Activated naive CD4-positive, alpha-beta T cell treated with anti-CD3 and anti-CD28 coated beads for 36 hours (primary cell): ENCODE measurements at regions of chr7 and their contacts with region 1.

Region 1: DNA sequence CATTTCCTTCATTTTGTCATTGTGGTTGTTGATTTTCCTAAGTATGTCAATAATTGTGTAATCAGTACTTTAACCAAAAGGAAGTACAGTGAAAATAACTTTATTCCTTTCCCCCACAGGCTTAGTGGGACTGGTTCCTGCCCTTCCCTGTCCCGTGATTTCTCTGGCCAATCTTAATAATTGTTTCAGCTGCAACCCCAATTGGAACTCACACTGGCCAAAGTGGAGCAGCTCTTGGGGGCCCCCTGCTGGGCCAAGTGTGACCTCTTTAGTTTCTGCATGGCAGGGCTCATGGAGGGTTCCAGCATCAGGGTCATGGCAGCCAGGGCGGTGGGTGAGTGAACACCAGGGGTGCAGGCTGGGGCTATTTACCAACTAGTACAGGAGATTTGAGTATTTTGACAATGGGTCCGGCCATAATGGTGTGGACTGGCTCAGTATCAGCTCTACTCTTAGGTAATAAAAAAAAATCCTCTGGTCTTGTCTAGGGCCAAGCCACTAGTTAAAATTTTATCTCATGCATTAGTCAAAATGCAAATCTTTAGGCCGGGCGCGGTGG is 31.7 kb downstream of the CYCS start:
- DNase-seq: peak; percentile 90
- H3K4me3 Mint-ChIP-seq: no peak overlapping the region
- H3K27ac Mint-ChIP-seq: no peak overlapping the region
- H3K4me1 Mint-ChIP-seq: peaks cover 8% of the 10 kb centered on the region
- H3K27me3 Mint-ChIP-seq: peaks cover 2% of the 10 kb centered on the region

Region 2: DNA sequence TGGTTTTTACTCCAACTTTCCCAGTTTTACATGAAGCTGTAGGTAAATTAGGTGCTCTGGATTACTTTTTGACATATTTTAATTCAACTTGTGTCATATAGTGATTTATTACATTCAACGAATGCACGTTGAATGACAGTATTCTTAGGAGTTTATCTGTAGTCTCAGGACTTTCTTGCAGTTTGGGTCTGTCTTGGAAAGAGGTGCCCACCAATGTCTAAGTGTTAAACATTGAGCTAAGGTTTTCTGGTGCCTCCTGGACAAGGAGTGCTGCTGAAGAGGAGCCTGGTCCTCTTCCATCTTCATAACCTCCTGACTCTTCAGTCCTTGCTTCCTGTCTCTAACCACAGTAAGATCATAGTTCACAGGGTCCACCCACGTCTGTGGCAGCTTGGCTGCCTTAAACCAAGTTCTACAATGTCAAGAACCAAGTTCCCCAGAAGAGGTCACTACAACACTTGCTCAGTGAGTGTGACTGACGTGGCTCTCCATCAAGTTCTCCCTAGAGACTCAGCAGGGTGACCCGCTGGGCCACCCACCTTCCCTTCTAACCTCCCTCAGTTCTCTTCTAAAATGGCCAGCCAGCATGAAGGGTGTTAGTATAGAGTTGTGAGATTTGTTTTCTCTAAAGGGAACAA is 803.2 kb before region 1 on chr7:
- CTCF ChIA-PET with region 1: no interaction called
- intact Hi-C with region 1: loop called (anchors 5 kb)
- DNase-seq: peak; percentile 74
- H3K4me3 Mint-ChIP-seq: no peak overlapping the region
- H3K27ac Mint-ChIP-seq: no peak overlapping the region
- H3K4me1 Mint-ChIP-seq: peaks cover 12% of the 10 kb centered on the region
- H3K27me3 Mint-ChIP-seq: peaks cover 29% of the 10 kb centered on the region

Region 3: GRCh38 chr7:24722386-24723177 is 370.8 kb before region 1 on chr7:
- CTCF ChIA-PET with region 1: interaction called, 3 read pairs
- intact Hi-C with region 1: loop called (anchors 10 kb)
- DNase-seq: no peak
- H3K4me3 Mint-ChIP-seq: no peak overlapping the region
- H3K27ac Mint-ChIP-seq: no peak overlapping the region
- H3K4me1 Mint-ChIP-seq: peaks cover 8% of the 10 kb centered on the region
- H3K27me3 Mint-ChIP-seq: peaks cover 12% of the 10 kb centered on the region

Region 4: DNA sequence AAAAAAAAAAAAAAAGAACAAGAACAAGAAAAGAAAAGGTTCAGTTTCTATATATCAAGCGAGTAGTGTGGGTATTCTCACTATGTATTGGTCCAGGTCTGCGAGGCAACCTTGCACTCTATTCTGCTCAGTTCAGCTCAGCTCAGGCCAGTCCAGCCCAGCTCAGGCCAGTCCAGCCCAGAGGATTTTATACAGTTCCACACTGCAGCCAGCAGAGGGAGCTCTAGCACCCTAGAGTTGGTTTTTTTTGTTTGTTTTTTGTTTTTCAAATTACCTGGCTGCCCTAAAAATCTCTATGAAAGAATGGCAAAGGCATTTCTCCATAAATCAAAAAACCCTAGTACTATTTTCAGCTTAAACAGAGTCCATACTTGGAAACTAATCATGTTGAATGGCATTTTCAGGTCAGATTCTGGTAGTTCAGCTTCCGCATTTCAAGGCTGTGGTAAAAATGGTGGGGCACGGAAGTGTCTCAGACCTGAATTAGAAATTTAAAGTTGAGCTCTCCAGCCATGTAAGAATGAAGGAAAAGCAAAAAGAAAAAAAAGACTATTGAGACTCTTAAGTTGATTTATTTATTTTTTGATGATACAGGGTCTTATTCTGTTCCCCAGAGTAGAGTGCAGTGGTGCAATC is 280.9 kb before region 1 on chr7:
- CTCF ChIA-PET with region 1: interaction called, 191 read pairs
- intact Hi-C with region 1: loop called (anchors 1 kb)
- DNase-seq: peak; percentile 58
- H3K4me3 Mint-ChIP-seq: no peak overlapping the region
- H3K27ac Mint-ChIP-seq: no peak overlapping the region
- H3K4me1 Mint-ChIP-seq: no peaks in the 10 kb centered on the region
- H3K27me3 Mint-ChIP-seq: no peaks in the 10 kb centered on the region

Region 5: GRCh38 chr7:25028370-25029021 is 64.9 kb before region 1 on chr7:
- CTCF ChIA-PET with region 1: interaction called, 12 read pairs
- intact Hi-C with region 1: loop called (anchors 1 kb)
- DNase-seq: peak; percentile 38
- H3K4me3 Mint-ChIP-seq: no peak overlapping the region
- H3K27ac Mint-ChIP-seq: peak overlapping the region; percentile 79
- H3K4me1 Mint-ChIP-seq: peaks cover 37% of the 10 kb centered on the region
- H3K27me3 Mint-ChIP-seq: no peaks in the 10 kb centered on the region

Region 6: DNA sequence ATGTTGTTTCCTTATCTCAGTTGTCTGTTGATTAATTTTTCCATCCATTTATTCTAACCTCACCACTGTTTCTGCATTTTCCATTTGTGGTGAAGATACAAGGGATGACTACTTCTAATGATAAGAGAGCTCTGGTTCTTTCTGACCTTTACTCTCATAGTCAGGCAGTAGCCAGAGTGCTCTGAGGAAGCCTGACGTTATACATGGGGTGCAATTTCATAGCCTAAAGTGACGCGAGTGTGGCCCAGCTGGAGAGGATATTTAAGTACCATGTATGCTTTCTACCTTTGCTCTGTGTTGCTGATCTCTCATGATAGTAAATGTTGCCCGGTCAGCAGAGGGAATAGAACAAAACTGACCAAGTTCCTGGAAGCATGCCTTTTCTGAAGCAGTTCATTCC is 65.6 kb after region 1 on chr7:
- CTCF ChIA-PET with region 1: interaction called, 5 read pairs
- intact Hi-C with region 1: loop called (anchors 1 kb)
- DNase-seq: no peak
- H3K4me3 Mint-ChIP-seq: no peak overlapping the region
- H3K27ac Mint-ChIP-seq: no peak overlapping the region
- H3K4me1 Mint-ChIP-seq: no peaks in the 10 kb centered on the region
- H3K27me3 Mint-ChIP-seq: no peaks in the 10 kb centered on the region